Psoas muscle (tissue), 8 donors: ENCODE measurements at regions of chr7 and their contacts with region 1.

Region 1: GRCh38 chr7:138981332-138982203 is at the start of gene KIAA1549:
- DNase-seq: peak; percentile 70 to 71
- ATAC-seq: peak; percentile 87 to 96 (median 95)
- H3K4me3 ChIP-seq: peak within 1 kb of the TSS; percentile 73
- H3K27ac ChIP-seq: peak within 1 kb of the TSS; percentile 46
- H3K4me1 ChIP-seq: peaks cover 8% of the 10 kb centered on the region
- H3K27me3 ChIP-seq: peaks cover 0 to 14% (median 0%) of the 10 kb centered on the region in 3 donors
- CTCF ChIP-seq: peak; percentile 34
- total RNA-seq, gene KIAA1549: 1.2 to 4.4 (median 2.9) TPM

Region 2: GRCh38 chr7:138875794-138876193 is 105.8 kb before region 1 on chr7:
- intact Hi-C with region 1: no loop called
- DNase-seq: no peak
- ATAC-seq: no peak
- H3K4me3 ChIP-seq: no peak overlapping the region
- H3K27ac ChIP-seq: no peak overlapping the region
- H3K4me1 ChIP-seq: no peaks in the 10 kb centered on the region
- H3K27me3 ChIP-seq: no peaks in the 10 kb centered on the region
- CTCF ChIP-seq: no peak

Region 3: GRCh38 chr7:138886501-138886917 is 95.1 kb before region 1 on chr7:
- intact Hi-C with region 1: loop called in 1 of 2 experiments (anchors 5 kb)
- DNase-seq: no peak
- ATAC-seq: no peak
- H3K4me3 ChIP-seq: no peak overlapping the region
- H3K27ac ChIP-seq: no peak overlapping the region
- H3K4me1 ChIP-seq: peaks cover 7% of the 10 kb centered on the region
- H3K27me3 ChIP-seq: no peaks in the 10 kb centered on the region
- CTCF ChIP-seq: peak; percentile 57